Aorta (tissue), 5 donors: ENCODE measurements at regions of chr1 and their contacts with region 1.

Region 1: GRCh38 chr1:179365320-179366092 is at the start of gene AXDND1:
- DNase-seq: peak; percentile 93 to 96
- ATAC-seq: peak; percentile 96
- H3K4me3 ChIP-seq: peak within 1 kb of the TSS; percentile 71 to 82
- H3K27ac ChIP-seq: peak within 1 kb of the TSS; percentile 47 to 90
- H3K4me1 ChIP-seq: no peaks in the 10 kb centered on the region
- H3K27me3 ChIP-seq: no peaks in the 10 kb centered on the region
- total RNA-seq, gene AXDND1: not detected

Region 2: DNA sequence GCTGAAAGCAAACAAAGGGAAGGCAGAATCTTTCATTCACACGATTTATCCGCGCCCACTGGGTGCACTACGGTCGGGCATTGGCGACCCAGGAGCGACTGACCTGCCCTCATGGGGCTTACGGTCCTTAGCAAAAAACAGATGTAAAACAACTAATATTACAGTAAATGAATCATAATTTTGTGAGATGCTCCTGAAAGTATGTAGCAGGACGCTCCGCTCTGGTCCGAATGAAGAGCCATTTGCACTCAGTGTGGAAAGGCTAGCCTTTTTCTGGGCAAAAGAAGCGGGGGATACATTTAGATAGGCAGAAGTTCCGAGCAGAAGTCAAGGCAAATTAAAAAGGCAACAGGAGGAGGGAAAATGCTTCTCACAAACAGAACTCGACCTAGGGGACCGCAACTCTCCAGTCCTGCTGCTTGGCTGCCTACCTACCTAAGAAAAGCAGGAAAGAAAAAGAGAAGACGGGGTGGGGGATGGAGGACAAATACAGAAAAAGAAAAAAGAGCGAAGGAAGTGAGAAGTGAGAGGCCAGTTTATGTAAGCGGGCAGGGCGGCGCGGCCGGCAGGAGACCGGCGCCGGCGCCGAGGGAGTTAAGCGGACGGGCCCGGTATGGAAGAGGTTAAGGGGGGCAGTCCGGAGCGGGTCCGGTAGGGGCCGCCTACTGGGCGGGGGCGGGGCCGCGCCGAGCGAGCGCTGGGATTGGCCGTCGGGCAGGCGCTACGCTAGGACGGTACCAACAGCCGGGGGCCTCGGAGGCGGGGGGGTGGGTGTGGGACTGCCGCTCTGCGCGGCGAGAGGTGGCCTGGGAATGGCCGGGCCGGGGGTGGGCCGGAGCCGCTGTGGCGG is 340.2 kb before region 1 on chr1 and contains the start of gene FAM20B:
- intact Hi-C with region 1: loop called in 1 of 2 experiments (anchors 5 kb)
- DNase-seq: peak; percentile 96 to 99
- ATAC-seq: peak; percentile 98
- H3K4me3 ChIP-seq: peak within 1 kb of the TSS; percentile 82 to 90
- H3K27ac ChIP-seq: peak within 1 kb of the TSS; percentile 57 to 74
- H3K4me1 ChIP-seq: peaks cover 0 to 9% of the 10 kb centered on the region in 2 donors
- H3K27me3 ChIP-seq: no peaks in the 10 kb centered on the region
- total RNA-seq, gene FAM20B: 55.6 to 75.5 TPM

Region 3: DNA sequence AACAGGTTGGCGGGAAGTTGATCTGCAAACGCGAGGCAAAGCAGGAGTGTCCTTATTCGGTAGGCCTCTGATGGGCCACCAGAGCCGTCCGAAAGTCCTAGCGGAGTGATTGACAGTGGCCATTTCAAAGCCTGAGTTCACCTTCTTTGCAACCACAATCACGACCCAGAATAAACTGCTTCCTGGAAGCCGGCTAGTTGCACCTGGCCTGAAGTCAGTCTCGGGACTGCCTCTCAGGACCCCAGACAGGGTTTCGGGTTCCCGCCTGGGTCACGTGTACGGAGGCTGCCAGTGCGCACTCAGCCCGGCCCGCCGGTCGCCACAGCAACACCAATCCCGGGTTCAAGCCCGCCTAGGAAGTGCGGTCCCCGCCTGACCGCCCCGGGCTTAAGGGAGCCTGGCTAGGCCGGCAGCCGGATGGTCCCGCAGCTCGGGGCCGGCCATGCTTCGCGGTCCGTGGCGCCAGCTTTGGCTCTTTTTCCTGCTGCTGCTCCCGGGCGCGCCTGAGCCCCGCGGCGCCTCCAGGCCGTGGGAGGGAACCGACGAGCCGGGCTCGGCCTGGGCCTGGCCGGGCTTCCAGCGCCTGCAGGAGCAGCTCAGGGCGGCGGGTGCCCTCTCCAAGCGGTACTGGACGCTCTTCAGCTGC is 283.7 kb before region 1 on chr1 and contains the start of gene TOR3A:
- intact Hi-C with region 1: loop called (anchors 2 to 5 kb)
- DNase-seq: peak; percentile 96
- ATAC-seq: peak; percentile 97
- H3K4me3 ChIP-seq: peak within 1 kb of the TSS; percentile 44 to 80
- H3K27ac ChIP-seq: peak within 1 kb of the TSS in 1 of 2 donors; percentile 92
- H3K4me1 ChIP-seq: peaks cover 0 to 3% of the 10 kb centered on the region in 2 donors
- H3K27me3 ChIP-seq: no peaks in the 10 kb centered on the region
- total RNA-seq, gene TOR3A: 13.9 to 18.5 TPM

Region 4: DNA sequence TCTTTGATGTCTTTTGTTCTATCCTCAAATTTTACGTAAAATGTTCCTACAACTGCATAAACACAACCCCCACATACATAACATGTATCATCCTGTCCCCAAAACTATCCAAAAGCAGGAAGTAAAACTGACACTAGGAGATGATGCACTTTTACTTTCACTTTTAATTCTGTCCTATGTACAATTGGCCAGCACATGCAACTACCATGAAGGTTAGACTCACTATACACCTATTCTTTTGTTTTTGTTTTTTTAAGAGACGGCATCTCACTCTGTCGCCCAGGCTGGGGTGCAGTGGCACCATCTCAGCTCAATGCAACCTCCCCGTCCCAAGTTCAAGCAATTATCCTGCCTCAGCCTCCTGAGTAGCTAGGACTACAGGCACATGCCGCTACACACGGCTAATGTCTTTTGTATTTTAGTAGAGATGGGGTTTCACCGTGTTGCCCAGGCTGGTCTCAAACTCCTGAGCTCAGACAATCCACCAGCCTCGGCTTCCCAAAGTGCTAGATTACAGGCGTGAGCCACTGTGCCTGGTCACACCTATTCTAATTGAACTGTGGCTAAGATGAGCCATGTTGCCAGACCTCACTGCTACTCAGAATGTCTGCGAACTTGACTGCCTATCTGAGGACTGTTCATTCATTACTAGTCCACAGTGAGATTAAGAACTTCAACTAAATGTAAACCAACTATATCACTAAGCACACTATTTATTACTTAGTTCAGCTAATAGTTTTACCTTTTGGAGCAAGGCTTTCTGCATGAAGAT is 235.6 kb before region 1 on chr1:
- intact Hi-C with region 1: loop called in 1 of 2 experiments (anchors 5 kb)
- DNase-seq: no peak
- ATAC-seq: peak; percentile 59
- H3K4me3 ChIP-seq: no peak overlapping the region
- H3K27ac ChIP-seq: peak overlapping the region in 1 of 2 donors; percentile 51
- H3K4me1 ChIP-seq: peaks cover 2% of the 10 kb centered on the region in 2 donors
- H3K27me3 ChIP-seq: no peaks in the 10 kb centered on the region

Region 5: GRCh38 chr1:179241523-179242097 is 123.9 kb before region 1 on chr1:
- intact Hi-C with region 1: no loop called
- DNase-seq: no peak
- ATAC-seq: no peak
- H3K4me3 ChIP-seq: no peak overlapping the region
- H3K27ac ChIP-seq: no peak overlapping the region
- H3K4me1 ChIP-seq: no peaks in the 10 kb centered on the region
- H3K27me3 ChIP-seq: no peaks in the 10 kb centered on the region

Region 6: DNA sequence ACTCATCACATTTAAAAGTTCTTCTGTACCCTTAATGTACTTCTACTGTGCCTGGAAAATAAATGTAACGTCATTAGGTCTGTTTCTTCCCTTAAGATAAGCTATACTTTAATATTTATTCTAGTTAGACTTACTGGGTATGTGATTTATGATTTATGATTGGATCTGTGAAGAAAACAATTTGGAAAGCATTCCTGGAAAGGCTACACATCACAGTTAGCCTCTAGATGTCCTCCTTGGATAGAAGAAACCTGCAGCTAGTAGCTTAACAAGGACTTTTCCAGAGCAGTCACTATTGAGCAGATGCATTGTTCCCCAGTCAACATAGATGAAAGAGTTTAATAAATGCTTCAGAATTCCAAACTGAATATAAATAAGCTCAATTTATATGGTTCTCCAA is 113.8 kb before region 1 on chr1:
- intact Hi-C with region 1: loop called in 1 of 2 experiments (anchors 10 kb)
- DNase-seq: no peak
- ATAC-seq: no peak
- H3K4me3 ChIP-seq: no peak overlapping the region
- H3K27ac ChIP-seq: no peak overlapping the region
- H3K4me1 ChIP-seq: no peaks in the 10 kb centered on the region
- H3K27me3 ChIP-seq: no peaks in the 10 kb centered on the region

Region 7: DNA sequence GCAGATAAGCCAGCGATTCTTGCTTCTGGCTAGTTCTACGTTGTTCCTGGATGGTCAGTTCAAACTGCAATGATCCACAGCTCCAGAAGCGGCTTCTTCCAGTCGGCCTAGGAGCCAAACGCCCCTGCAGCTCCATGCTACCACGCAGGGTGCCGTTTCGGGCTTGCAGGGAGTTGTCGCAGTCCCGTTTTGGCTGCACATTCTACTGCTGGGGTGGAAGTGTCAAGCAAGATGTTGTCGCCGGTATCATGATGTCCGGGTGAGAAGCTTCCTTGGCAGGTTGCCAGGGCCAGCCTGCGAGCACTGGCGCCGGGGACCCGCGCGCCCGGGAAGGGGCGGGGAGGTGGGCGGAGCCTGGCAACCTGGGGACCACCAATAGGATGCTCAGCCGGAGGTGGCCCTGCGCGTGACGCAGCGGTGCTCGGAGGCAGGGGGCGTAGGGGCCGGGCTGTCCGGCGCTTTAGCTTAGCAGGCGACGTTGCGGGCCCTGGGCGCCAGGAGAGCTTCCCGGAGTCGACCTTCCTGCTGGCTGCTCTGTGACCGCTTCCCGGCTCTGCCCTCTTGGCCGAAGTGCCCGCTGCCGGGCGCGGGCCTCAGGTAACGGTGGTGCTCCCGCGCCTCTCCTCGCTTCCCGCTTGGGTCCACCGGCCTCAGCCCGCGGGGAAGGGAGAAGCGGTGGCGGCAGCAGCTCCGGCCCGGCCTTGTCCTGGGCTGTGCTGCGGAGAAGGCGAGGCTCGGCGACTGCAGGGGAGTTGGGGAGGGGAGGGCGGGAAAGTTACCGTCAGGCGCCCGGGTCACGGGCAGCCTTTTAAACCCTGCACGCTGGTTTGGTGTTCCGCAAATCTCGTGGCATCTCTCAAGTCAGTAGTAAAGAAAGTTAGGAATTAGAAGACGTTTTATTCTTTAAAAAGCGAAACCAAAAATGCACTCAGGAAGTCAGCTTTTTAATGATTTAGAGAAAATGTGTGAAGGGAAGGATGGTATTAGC is 71.9 kb before region 1 on chr1 and contains the start of gene SOAT1:
- intact Hi-C with region 1: loop called in 1 of 2 experiments (anchors 1 kb)
- DNase-seq: peak; percentile 97 to 98
- ATAC-seq: peak; percentile 98
- H3K4me3 ChIP-seq: peak within 1 kb of the TSS; percentile 63 to 75
- H3K27ac ChIP-seq: peak within 1 kb of the TSS; percentile 2 to 87
- H3K4me1 ChIP-seq: peaks cover 2 to 3% of the 10 kb centered on the region in 2 donors
- H3K27me3 ChIP-seq: no peaks in the 10 kb centered on the region
- total RNA-seq, gene SOAT1: 38.6 to 42.7 TPM

Region 8: GRCh38 chr1:179637211-179637860 is 271.8 kb after region 1 on chr1:
- intact Hi-C with region 1: no loop called
- DNase-seq: no peak
- ATAC-seq: no peak
- H3K4me3 ChIP-seq: no peak overlapping the region
- H3K27ac ChIP-seq: no peak overlapping the region
- H3K4me1 ChIP-seq: no peaks in the 10 kb centered on the region
- H3K27me3 ChIP-seq: no peaks in the 10 kb centered on the region

Region 9: GRCh38 chr1:180065811-180066549 is 700.5 kb after region 1 on chr1:
- intact Hi-C with region 1: no loop called
- DNase-seq: no peak
- ATAC-seq: no peak
- H3K4me3 ChIP-seq: no peak overlapping the region
- H3K27ac ChIP-seq: no peak overlapping the region
- H3K4me1 ChIP-seq: no peaks in the 10 kb centered on the region
- H3K27me3 ChIP-seq: no peaks in the 10 kb centered on the region